HEK293 (cell line): ENCODE measurements at regions of chr7 and their contacts with region 1.

Region 1: GRCh38 chr7:5494683-5495561 is 71.3 kb upstream of the TNRC18 start:
- H3K4me3 ChIP-seq: no peak overlapping the region
- H3K27ac ChIP-seq: no peak overlapping the region
- H3K4me1 ChIP-seq: no peaks in the 10 kb centered on the region
- CTCF ChIP-seq: peak; percentile 79

Region 2: DNA sequence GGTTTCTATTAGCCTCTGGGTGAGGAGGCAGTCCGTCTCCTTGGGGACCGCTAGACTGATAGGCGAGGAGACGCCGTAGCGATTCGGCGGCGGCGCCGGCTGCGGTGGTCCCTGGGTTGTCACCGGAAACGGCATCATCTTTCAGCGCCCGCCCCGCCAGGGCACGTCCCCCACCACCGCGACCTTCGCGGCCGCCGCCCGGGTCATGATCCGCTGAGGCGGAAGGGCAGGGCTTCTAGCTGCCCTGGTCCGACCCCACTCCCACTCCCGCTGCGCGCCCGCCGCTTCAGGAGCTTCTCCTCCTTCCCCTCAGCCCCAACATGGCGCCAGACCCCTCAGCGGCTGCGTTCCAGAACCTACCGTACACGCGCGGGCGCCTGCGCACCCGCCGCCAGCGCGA is 633.2 kb before region 1 on chr7 and contains the start of gene PAPOLB:
- CTCF ChIA-PET with region 1: no interaction called
- POLR2A ChIA-PET with region 1: no interaction called
- H3K4me3 ChIP-seq: no peak within 1 kb of the TSS
- H3K27ac ChIP-seq: no peak within 1 kb of the TSS
- H3K4me1 ChIP-seq: no peaks in the 10 kb centered on the region
- CTCF ChIP-seq: no peak

Region 3: GRCh38 chr7:5314864-5315263 is 180.1 kb before region 1 on chr7:
- CTCF ChIA-PET with region 1: no interaction called
- POLR2A ChIA-PET with region 1: no interaction called
- H3K4me3 ChIP-seq: no peak overlapping the region
- H3K27ac ChIP-seq: no peak overlapping the region
- H3K4me1 ChIP-seq: no peaks in the 10 kb centered on the region
- CTCF ChIP-seq: no peak

Region 4: GRCh38 chr7:5363729-5364128 is 131.2 kb before region 1 on chr7:
- CTCF ChIA-PET with region 1: interaction called, 10 read pairs
- POLR2A ChIA-PET with region 1: no interaction called
- H3K4me3 ChIP-seq: no peak overlapping the region
- H3K27ac ChIP-seq: no peak overlapping the region
- H3K4me1 ChIP-seq: no peaks in the 10 kb centered on the region
- CTCF ChIP-seq: no peak

Region 5: GRCh38 chr7:5445981-5446594 is 48.8 kb before region 1 on chr7:
- CTCF ChIA-PET with region 1: no interaction called
- POLR2A ChIA-PET with region 1: no interaction called
- H3K4me3 ChIP-seq: no peak overlapping the region
- H3K27ac ChIP-seq: no peak overlapping the region
- H3K4me1 ChIP-seq: no peaks in the 10 kb centered on the region
- CTCF ChIP-seq: no peak

Region 6: GRCh38 chr7:5665094-5666025 is 170.4 kb after region 1 on chr7:
- CTCF ChIA-PET with region 1: interaction called, 69 read pairs
- POLR2A ChIA-PET with region 1: interaction called, 6 read pairs
- H3K4me3 ChIP-seq: no peak overlapping the region
- H3K27ac ChIP-seq: no peak overlapping the region
- H3K4me1 ChIP-seq: no peaks in the 10 kb centered on the region
- CTCF ChIP-seq: peak; percentile 47; the same call in 1 of the 2 replicates

Region 7: DNA sequence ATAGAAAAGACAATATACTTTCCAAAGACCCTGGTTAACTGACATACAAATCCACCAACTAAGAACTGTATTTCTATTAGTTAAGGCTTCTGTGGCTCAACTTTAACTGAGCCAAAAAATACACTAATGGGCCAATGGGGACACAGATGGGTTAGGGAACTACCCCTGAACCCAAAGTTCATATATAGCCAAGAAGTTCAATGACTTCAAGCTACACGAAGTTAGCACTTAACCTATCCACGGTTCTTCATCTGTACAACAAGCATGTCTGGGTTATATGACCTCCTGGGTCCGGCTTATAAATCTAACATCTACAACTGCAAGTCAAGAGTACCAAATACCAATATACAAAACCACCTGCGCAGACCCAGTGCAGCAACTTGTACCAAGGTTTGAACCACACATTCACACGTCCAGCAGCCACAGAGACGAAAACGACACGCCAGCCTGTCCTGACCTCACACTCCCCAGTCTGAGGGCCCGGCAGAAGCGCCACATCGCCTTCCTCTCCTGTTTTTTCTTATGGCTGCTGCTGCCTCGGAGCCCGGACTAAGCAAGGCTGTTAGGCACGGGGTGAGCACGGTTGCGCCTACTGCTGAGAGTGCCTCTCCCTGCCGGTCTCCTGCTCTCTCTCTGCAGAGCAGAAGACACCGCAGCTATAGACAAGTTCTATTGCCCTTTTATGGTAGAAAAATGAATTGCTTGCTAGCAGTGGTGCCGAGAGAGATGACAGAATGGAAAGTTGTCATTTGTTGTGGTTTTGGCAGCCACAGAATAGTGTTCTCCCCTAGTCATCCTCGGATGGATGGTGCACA is 200.2 kb after region 1 on chr7:
- CTCF ChIA-PET with region 1: interaction called, 11 read pairs
- POLR2A ChIA-PET with region 1: no interaction called
- H3K4me3 ChIP-seq: no peak overlapping the region
- H3K27ac ChIP-seq: no peak overlapping the region
- H3K4me1 ChIP-seq: peaks cover 13% of the 10 kb centered on the region
- CTCF ChIP-seq: no peak